ENCODE measurements at regions of chr11 and their contacts with region 1.

Region 1: GRCh38 chr11:61581030-61581928 is at the start of gene SYT7:
- DNase-seq: peak; percentile 98
- H3K4me3 ChIP-seq: peak within 1 kb of the TSS; percentile 24 to 57 (median 52)
- H3K27ac ChIP-seq: peak within 1 kb of the TSS in 3 of 4 donors; percentile 63 to 77 (median 70)
- H3K4me1 ChIP-seq: peaks cover 4 to 12% (median 8%) of the 10 kb centered on the region in 4 donors
- H3K27me3 ChIP-seq: peaks cover 14 to 34% (median 14%) of the 10 kb centered on the region in 3 donors
- CTCF ChIP-seq: peak in 1 of 4 experiments; percentile 7
- EP300 ChIP-seq: no peak
- POLR2A ChIP-seq: no peak
- total RNA-seq, gene SYT7: 0.66 to 3.6 (median 1.6) TPM

Region 2: GRCh38 chr11:61516675-61517572 is 64.4 kb before region 1 on chr11:
- intact Hi-C with region 1: loop called (anchors 1 kb)
- DNase-seq: no peak
- H3K4me3 ChIP-seq: peak overlapping the region in 2 of 4 donors; percentile 20 to 28
- H3K27ac ChIP-seq: peak overlapping the region in 2 of 4 donors; percentile 21 to 40
- H3K4me1 ChIP-seq: peaks cover 0 to 13% (median 10%) of the 10 kb centered on the region in 4 donors
- H3K27me3 ChIP-seq: peaks cover 0 to 5% (median 0%) of the 10 kb centered on the region in 3 donors
- CTCF ChIP-seq: peak; percentile 97 to 100 (median 98)
- EP300 ChIP-seq: no peak
- POLR2A ChIP-seq: no peak